ENCODE measurements at regions of chr9 and their contacts with region 1.

Region 1: DNA sequence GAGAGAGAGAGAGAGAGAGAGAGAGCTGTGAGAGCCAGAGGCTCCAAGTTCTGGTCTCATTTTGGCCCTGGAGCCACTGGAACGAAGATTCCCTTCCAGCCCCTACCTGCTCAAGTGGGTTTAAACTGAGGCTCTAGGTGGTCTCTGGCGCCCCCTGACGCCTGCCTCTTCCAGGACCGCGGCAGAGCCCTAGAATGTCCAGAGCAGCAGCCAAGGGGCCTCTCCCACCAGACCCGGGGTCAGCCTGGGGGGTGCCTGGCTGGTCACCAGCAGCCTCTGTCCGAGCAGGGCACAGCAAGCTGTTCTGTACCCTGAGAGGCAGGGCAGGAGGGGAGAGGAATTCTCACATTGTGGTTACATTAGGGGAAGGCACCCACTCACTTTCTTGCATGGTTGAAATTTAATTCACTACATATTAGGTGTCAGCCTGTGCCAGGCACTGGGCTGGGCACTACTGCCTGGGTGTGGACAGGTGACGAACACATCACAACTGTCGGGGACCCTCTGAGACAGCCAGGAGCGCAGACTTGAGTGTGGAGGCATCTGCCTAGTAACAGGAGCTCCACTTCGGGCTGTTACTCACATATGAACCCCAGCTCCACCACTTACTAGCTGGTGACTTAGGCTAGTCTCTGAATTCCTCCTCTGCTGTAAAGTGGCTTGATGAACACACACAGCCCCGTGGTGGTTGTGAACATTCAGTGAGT is 44.5 kb downstream of the AMBP start:
- DNase-seq: peak; percentile 4
- H3K4me3 ChIP-seq: no peak overlapping the region
- H3K27ac ChIP-seq: no peak overlapping the region
- H3K4me1 ChIP-seq: no peaks in the 10 kb centered on the region
- H3K27me3 ChIP-seq: no peaks in the 10 kb centered on the region
- CTCF ChIP-seq: peak in 3 of 4 experiments; percentile 32 to 41 (median 39)
- POLR2A ChIP-seq: no peak

Region 2: GRCh38 chr9:113682297-113682771 is 351.2 kb before region 1 on chr9:
- intact Hi-C with region 1: loop called (anchors 10 kb)
- DNase-seq: peak; percentile 67
- H3K4me3 ChIP-seq: no peak overlapping the region
- H3K27ac ChIP-seq: no peak overlapping the region
- H3K4me1 ChIP-seq: no peaks in the 10 kb centered on the region
- H3K27me3 ChIP-seq: no peaks in the 10 kb centered on the region
- CTCF ChIP-seq: peak; percentile 71 to 84 (median 78)
- POLR2A ChIP-seq: no peak

Measured in prostate gland (tissue), 2 donors.